Calu3 (cell line): ENCODE measurements at regions of chr10 and their contacts with region 1.

Region 1: GRCh38 chr10:58137813-58138212 is 129.9 kb downstream of the IPMK start:
- DNase-seq: peak; percentile 65
- H3K4me3 Mint-ChIP-seq: peak overlapping the region; percentile 55
- H3K27ac Mint-ChIP-seq: peak overlapping the region; percentile 71
- H3K4me1 Mint-ChIP-seq: peaks cover 25% of the 10 kb centered on the region
- H3K27me3 Mint-ChIP-seq: no peaks in the 10 kb centered on the region
- CTCF ChIP-seq: no peak

Region 2: GRCh38 chr10:58086144-58086764 is 51.6 kb before region 1 on chr10:
- CTCF ChIA-PET with region 1: no interaction called
- intact Hi-C with region 1: loop called (anchors 5 kb)
- DNase-seq: no peak
- H3K4me3 Mint-ChIP-seq: no peak overlapping the region
- H3K27ac Mint-ChIP-seq: no peak overlapping the region
- H3K4me1 Mint-ChIP-seq: peaks cover 22% of the 10 kb centered on the region
- H3K27me3 Mint-ChIP-seq: no peaks in the 10 kb centered on the region
- CTCF ChIP-seq: no peak

Region 3: GRCh38 chr10:59405235-59405634 is 1267.4 kb after region 1 on chr10:
- CTCF ChIA-PET with region 1: no interaction called
- intact Hi-C with region 1: no loop called
- DNase-seq: no peak
- H3K4me3 Mint-ChIP-seq: no peak overlapping the region
- H3K27ac Mint-ChIP-seq: no peak overlapping the region
- H3K4me1 Mint-ChIP-seq: no peaks in the 10 kb centered on the region
- H3K27me3 Mint-ChIP-seq: peaks cover 16% of the 10 kb centered on the region
- CTCF ChIP-seq: no peak